ENCODE measurements at regions of chr11 and their contacts with region 1.

Region 1: DNA sequence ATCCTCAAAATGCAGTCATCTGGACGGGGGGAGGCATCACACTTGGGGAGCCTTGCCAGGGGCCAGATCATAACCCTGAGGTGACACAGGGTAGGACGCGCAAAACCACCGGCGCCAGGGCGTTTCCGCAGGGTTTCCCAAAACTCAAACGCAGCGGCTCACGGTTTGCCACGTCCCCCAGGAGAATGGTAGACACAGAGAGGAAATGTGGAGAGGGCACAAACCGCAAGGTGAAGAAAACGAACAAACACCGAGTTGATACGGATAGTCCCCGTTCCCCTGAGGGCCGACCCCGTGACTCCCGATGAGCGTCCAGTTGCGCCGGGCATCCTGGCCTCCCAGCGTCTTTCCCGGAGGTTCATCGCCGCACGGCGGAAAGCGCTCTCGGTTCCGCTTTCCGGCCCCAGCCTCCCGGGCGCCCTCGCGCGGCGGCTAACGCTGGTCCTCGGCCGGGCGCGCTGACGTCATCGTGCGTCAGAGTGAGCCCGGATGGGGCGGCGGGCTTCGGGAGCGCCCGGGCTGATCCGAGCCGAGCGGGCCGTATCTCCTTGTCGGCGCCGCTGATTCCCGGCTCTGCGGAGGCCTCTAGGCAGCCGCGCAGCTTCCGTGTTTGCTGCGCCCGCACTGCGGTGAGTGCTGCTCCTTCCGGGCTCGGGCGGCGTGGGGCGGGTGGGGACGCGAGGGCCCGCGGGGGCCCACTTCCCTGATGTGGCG is at the start of gene BIRC2:
- DNase-seq: peak; percentile 96
- H3K4me3 ChIP-seq: peak within 1 kb of the TSS; percentile 63 to 90 (median 83)
- H3K27ac ChIP-seq: peak within 1 kb of the TSS; percentile 92 to 99 (median 99)
- H3K4me1 ChIP-seq: peaks cover 0 to 38% (median 33%) of the 10 kb centered on the region in 4 donors
- H3K27me3 ChIP-seq: no peaks in the 10 kb centered on the region
- CTCF ChIP-seq: peak; percentile 61 to 86 (median 73)
- EP300 ChIP-seq: peak in 1 of 4 donors; percentile 10
- POLR2A ChIP-seq: peak; percentile 87 to 88
- total RNA-seq, gene BIRC2: 32.7 to 56.0 (median 53.2) TPM

Region 2: DNA sequence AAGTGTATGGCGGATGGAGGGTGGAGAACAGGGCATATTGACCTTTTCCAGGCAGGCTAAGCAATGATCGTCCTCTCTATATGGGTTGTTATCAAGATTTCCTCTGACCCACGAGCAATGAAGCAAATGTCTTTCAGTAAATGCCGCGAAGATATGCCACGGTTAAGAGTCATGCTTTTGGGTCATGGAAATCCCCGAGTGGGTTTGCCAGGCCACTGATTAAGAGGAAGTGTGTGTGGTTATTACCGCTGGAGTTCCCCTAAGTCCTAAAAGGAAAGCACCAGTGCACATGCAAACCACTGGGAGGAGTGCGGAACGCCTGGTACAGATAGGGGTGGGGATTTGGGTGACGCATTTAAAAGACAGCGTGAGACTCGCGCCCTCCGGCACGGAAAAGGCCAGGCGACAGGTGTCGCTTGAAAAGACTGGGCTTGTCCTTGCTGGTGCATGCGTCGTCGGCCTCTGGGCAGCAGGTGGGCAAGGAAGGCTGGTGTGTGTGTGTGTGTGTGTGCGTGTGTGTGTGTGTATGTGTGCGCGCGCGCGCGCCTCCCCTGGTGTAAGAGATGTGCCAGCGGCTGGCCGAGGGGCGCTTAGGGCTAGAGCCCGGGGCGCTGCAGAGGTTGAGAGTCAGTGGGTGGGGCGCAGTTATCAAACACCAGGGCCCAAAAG is 29.7 kb before region 1 on chr11 and contains the start of gene BIRC3:
- intact Hi-C with region 1: loop called (anchors 2 kb)
- DNase-seq: peak; percentile 92
- H3K4me3 ChIP-seq: peak within 1 kb of the TSS; percentile 56 to 73 (median 64)
- H3K27ac ChIP-seq: peak within 1 kb of the TSS; percentile 78 to 85 (median 83)
- H3K4me1 ChIP-seq: peaks cover 0 to 61% (median 31%) of the 10 kb centered on the region in 4 donors
- H3K27me3 ChIP-seq: no peaks in the 10 kb centered on the region
- CTCF ChIP-seq: peak; percentile 38 to 73 (median 69)
- EP300 ChIP-seq: peak in 1 of 4 donors; percentile 76
- POLR2A ChIP-seq: peak; percentile 8 to 68
- total RNA-seq, gene BIRC3: 9.1 to 18.4 (median 13.2) TPM

Region 3: DNA sequence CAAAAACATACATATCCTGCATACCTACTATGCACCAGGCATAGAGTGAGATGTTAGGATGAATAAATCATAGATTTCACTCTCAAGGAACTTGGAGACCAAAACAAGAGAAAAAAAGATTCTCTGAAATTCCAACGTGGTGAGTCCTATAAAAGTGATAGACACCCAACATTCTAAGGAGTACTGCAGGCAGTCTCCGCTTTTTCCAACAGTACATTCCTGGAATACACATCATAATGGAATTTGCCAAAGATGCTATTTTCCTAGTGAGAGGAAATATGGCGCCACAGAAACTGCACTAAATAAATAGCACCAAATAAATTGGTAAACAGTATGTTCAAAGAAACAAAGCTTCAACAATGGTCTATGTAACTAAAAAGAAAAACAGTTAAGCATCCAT is 99.7 kb after region 1 on chr11:
- intact Hi-C with region 1: no loop called
- DNase-seq: no peak
- H3K4me3 ChIP-seq: no peak overlapping the region
- H3K27ac ChIP-seq: peak overlapping the region in 1 of 4 donors; percentile 97
- H3K4me1 ChIP-seq: peaks cover 0 to 52% (median 35%) of the 10 kb centered on the region in 4 donors
- H3K27me3 ChIP-seq: no peaks in the 10 kb centered on the region
- CTCF ChIP-seq: no peak
- EP300 ChIP-seq: no peak
- POLR2A ChIP-seq: no peak

Region 4: DNA sequence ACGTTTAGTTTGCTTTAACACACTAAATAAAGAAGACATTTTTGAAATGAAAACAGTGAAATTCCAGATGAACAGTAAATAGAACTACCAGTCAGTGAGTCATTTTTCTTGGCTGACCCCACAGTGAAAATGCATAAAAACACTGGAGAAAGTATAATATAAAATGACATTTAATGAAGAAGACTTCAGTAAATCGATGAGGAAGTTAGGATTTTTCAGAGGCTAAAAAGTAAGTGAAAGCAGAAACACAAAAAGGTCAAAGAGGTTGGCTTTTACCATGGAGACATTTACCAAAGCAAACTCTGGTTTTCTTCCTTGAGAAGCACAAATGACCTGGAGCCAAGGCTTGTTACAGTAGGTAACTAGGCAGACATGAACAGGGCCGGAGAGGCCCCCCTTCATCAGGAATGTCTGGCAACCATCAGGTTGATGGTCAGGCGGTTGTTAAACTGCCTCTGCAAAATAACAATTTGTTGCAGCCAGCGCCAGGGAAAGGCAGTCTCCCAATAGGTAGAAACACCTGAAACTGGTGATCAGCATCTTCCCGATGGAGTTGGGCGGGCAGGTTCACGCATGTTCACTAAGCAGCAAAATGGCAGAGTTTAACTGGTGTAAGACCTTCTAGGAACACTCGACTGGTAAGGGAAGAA is 122.4 kb after region 1 on chr11:
- intact Hi-C with region 1: no loop called
- DNase-seq: peak; percentile 72
- H3K4me3 ChIP-seq: no peak overlapping the region
- H3K27ac ChIP-seq: peak overlapping the region; percentile 24 to 76 (median 56)
- H3K4me1 ChIP-seq: peaks cover 0 to 49% (median 33%) of the 10 kb centered on the region in 4 donors
- H3K27me3 ChIP-seq: no peaks in the 10 kb centered on the region
- CTCF ChIP-seq: no peak
- EP300 ChIP-seq: peak in 3 of 4 donors; percentile 10 to 81 (median 56)
- POLR2A ChIP-seq: no peak

Measured in sigmoid colon (tissue), 7 donors.